Common myeloid progenitor, CD34-positive (primary cell): ENCODE measurements at regions of chr3 and their contacts with region 1.

Region 1: DNA sequence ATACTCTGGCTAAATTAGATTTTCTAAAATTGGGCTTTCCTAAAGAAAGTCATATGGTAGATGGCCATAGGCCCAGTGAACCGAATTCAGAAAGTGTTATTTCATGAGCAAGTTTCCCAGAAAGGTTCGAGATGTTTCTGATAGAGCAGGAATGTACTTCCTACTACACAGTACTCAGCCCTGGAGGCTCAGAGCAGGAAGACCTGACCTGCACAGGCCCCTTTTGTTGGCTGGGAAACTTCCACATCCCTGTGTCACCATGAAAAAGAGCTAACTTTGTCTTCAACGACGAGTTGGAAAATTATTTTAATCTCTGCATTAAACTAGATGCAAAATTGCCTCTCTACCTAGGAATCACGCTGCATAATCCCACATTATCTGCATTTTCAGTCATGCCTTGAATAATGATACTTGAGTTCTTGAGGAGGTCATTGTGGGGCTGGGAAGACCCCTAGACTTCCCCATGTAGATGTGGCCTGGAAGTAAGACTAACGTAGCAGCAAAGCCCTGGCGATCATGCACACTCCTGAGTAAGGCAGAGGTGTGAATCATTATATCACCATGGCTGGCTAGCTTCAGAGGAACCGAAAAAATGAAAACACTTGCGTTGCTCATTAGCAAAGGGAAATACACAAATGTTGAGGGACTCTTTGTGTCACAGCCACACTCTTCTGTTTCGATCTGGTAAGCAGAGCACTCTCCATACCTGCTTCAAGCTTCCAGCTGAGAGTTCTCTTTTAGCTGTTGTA is 47.1 kb downstream of the CMTM7 start:
- DNase-seq: no peak
- H3K4me3 ChIP-seq: no peak overlapping the region
- H3K27ac ChIP-seq: no peak overlapping the region
- H3K4me1 ChIP-seq: peaks cover 0 to 20% (median 7%) of the 10 kb centered on the region in 4 experiments
- H3K27me3 ChIP-seq: no peaks in the 10 kb centered on the region

Region 2: GRCh38 chr3:32428092-32429068 is 10.4 kb before region 1 on chr3:
- CTCF ChIA-PET with region 1: interaction called, 14 read pairs
- POLR2A ChIA-PET with region 1: no interaction called
- DNase-seq: peak; percentile 17 to 75 (median 64)
- H3K4me3 ChIP-seq: peak overlapping the region in 4 of 7 experiments; percentile 8 to 28 (median 24)
- H3K27ac ChIP-seq: peak overlapping the region; percentile 17 to 73
- H3K4me1 ChIP-seq: peaks cover 13 to 84% (median 56%) of the 10 kb centered on the region in 4 experiments
- H3K27me3 ChIP-seq: no peaks in the 10 kb centered on the region

Region 3: DNA sequence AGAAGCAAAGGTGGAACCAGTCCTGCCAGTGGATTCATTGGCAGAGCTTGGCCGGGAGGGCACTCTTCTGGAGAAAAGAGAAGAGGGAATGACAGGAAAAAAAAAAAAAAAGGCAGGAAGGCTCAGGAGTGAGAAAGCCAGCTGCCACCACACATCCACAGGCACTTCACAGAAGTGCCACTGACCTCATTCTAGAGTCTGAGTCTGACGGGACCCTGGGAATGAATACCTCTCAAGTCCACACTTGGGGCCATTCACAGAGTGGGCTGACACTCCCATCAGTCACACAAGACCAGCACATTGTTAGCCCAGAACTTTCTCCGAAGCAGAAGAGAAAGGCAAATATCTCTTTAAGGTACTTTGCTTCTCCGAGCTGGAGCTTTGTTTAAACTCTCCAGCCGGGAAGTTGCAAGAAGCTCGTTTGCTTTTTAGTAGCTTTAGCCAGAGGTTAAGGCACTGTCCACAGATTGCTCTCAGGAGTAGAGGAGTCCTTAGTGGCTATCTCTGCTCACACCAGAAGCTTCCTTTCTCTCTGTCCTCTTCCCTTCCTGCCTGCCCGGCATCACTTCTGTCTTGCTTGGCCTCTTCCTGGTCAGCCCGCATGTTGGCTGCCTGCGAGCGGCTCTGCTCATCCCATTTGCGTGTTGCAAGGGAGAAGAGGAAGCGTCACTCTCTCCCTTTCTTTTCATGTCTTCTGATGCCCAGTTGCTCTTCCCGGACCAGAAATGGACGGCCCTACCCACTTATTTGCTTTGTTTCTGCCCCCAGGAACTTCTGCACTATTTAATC is 10.1 kb after region 1 on chr3:
- CTCF ChIA-PET with region 1: interaction called, 10 read pairs
- POLR2A ChIA-PET with region 1: no interaction called
- DNase-seq: no peak
- H3K4me3 ChIP-seq: no peak overlapping the region
- H3K27ac ChIP-seq: no peak overlapping the region
- H3K4me1 ChIP-seq: no peaks in the 10 kb centered on the region
- H3K27me3 ChIP-seq: no peaks in the 10 kb centered on the region

Region 4: DNA sequence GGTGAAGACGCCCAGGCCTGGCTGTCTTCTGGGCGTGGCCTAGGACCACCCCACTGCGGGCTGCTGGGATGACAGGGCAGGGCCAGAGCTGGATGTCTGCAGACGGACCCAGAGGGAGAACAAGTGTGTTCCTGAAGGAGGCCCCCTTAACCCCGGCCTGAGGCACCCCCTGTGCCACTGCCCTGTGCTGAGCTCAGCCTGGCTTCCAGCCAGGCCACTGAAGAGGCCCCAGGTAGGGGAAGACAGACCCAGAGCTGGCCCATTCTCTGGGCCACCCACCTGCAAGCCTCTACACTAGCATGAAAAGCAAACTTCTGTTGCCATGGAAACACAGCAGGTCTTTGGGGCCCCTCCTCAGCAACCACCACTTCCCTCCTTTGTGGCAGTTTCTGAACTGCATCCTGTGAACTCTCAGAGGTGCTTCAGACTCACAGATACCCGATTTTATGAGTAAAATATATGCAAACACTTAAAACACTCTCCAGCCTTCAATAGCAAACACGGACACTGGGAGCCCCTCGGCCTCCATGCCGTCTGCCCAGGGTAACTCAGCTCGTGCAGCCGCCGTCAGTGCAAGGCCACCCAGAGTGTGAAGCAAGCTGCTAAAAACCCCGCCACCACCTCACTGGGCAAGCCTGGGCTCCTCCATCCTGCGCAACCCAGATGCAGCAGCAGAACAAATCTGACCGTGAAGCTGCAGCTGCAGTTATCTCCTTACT is 21.4 kb after region 1 on chr3:
- CTCF ChIA-PET with region 1: interaction called, 10 read pairs
- POLR2A ChIA-PET with region 1: no interaction called
- DNase-seq: peak; percentile 82 to 97 (median 96)
- H3K4me3 ChIP-seq: peak overlapping the region in 3 of 7 experiments; percentile 12 to 61 (median 47)
- H3K27ac ChIP-seq: peak overlapping the region; percentile 40 to 87
- H3K4me1 ChIP-seq: peaks cover 4 to 49% (median 34%) of the 10 kb centered on the region in 4 experiments
- H3K27me3 ChIP-seq: no peaks in the 10 kb centered on the region

Region 5: DNA sequence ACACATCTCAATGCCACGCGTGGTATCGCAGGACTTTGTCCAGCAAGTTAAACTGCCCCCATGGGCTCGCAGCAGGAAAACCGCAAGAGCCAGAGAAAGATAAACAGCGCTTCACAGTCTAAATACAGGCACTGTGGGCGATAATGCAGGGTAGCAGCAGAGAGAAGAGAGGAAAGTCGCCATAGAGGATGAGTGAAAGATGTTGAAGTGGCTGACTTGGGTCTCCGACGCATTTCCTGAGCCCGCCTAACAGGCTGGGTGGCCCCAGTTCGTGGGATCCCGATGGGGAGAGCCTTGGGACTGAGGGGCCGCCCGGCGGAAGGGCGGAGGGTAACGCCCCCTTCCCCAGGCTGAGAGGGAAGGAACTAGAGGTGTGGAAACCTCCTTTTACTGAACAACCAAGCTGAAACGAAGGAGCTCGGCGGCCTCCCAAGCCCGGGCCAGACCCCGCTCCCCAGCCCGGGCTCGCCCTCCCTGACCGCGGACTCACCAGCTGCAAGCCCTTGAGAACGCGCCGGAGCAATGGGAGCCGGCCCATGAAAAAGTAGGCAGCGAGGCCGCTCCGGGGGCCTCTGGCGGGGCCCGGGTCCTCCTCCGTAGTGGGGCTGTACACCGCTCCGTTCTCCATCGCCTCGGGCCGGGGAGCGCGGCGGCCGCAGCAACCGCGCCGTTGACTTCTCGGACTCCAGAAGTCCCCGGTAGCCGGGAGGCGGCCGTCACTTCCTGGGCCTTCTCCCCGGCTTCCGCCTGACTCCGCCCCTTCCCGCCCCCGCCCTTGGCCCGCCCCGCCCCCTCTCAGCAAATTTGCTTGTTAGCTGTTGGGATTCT is 63.6 kb after region 1 on chr3 and contains the start of gene CMTM6:
- CTCF ChIA-PET with region 1: no interaction called
- POLR2A ChIA-PET with region 1: no interaction called
- DNase-seq: peak; percentile 62 to 80 (median 76)
- H3K4me3 ChIP-seq: peak within 1 kb of the TSS; percentile 84 to 98 (median 91)
- H3K27ac ChIP-seq: peak within 1 kb of the TSS; percentile 90 to 94
- H3K4me1 ChIP-seq: peaks cover 7 to 29% (median 17%) of the 10 kb centered on the region in 4 experiments
- H3K27me3 ChIP-seq: no peaks in the 10 kb centered on the region

Region 6: GRCh38 chr3:32681811-32682210 is 243.0 kb after region 1 on chr3:
- CTCF ChIA-PET with region 1: no interaction called
- POLR2A ChIA-PET with region 1: no interaction called
- DNase-seq: peak in 1 of 3 donors; percentile 9
- H3K4me3 ChIP-seq: no peak overlapping the region
- H3K27ac ChIP-seq: no peak overlapping the region
- H3K4me1 ChIP-seq: peaks cover 5 to 23% (median 16%) of the 10 kb centered on the region in 4 experiments
- H3K27me3 ChIP-seq: no peaks in the 10 kb centered on the region